ENCODE measurements at regions of chr5 and their contacts with region 1.

Region 1: DNA sequence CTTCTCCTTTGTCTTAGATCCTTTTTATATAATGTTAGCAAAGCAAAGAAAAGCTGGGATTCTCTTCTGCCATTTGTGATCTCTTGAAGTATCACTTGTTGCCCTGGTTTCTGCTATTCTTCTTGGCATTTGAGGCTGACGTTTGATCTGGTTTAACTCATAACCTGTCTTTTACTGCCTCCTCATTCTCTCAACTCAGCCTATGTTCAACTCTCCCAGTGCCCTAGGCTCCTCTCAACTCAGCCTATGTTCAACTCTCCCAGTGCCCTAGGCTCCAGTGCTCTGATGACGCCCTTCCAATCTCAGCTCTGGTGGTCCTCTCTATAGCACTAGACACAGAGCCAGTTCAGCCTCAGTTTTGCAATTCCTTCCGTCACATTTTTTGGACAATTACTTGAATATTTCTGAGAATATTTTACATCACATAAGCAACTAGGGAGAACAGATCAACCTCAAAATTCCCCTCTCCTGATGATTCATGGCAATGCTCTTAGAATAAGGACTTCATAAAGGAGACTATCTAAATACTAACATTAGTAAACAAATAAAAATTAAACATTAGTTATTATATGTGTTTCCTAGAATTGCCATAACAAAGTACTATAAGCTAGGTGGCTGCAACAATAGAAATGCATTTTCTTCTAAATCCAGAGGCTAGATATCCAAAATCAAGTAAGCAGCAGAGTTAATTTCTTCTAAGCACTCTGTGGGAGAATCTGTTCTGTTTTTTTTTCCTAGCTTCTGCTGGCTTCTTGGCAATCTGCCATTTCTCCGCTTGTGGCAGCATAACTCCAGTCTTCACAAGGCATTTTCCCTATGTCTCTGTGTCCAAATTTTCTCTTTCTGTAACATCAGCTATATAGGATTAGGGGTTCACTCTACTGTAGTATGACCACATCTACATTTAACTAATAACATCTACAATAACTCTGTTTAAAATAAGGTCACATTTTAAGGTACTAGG is 662.1 kb upstream of the FTMT start:
- DNase-seq: peak; percentile 75
- H3K4me3 ChIP-seq: no peak overlapping the region
- H3K27ac ChIP-seq: peak overlapping the region; percentile 69
- H3K4me1 ChIP-seq: peaks cover 19% of the 10 kb centered on the region
- H3K27me3 ChIP-seq: no peaks in the 10 kb centered on the region
- CTCF ChIP-seq: no peak
- POLR2A ChIP-seq: no peak

Region 2: DNA sequence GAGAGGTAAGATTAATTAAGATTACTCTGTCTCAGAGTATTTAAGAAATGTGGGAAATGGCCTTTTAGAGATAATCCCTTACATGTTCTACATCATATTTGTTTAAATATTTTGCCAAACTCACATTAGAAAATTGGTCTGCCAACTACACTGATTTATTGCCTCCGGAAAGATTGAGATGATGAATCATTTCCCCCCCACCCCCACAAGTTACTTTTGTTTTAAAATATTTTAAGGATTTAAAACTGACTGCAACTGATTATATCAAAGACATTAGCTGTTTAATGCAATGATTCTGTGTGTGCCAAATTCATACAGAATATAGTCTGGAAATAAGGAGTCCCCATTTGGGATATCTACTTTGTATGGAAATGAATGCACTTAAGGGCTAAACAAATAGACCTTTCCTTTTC is 51.1 kb before region 1 on chr5:
- CTCF ChIA-PET with region 1: no interaction called
- POLR2A ChIA-PET with region 1: no interaction called
- dilution Hi-C with region 1: no loop called
- intact Hi-C with region 1: loop called (anchors 1 kb)
- DNase-seq: peak; percentile 83
- H3K4me3 ChIP-seq: no peak overlapping the region
- H3K27ac ChIP-seq: peak overlapping the region; percentile 43
- H3K4me1 ChIP-seq: peaks cover 19% of the 10 kb centered on the region
- H3K27me3 ChIP-seq: no peaks in the 10 kb centered on the region
- CTCF ChIP-seq: no peak
- POLR2A ChIP-seq: no peak

Region 3: GRCh38 chr5:121226765-121227164 is 37.1 kb after region 1 on chr5:
- CTCF ChIA-PET with region 1: no interaction called
- POLR2A ChIA-PET with region 1: no interaction called
- dilution Hi-C with region 1: no loop called
- intact Hi-C with region 1: no loop called
- DNase-seq: no peak
- H3K4me3 ChIP-seq: no peak overlapping the region
- H3K27ac ChIP-seq: no peak overlapping the region
- H3K4me1 ChIP-seq: no peaks in the 10 kb centered on the region
- H3K27me3 ChIP-seq: no peaks in the 10 kb centered on the region
- CTCF ChIP-seq: no peak
- POLR2A ChIP-seq: no peak

Region 4: DNA sequence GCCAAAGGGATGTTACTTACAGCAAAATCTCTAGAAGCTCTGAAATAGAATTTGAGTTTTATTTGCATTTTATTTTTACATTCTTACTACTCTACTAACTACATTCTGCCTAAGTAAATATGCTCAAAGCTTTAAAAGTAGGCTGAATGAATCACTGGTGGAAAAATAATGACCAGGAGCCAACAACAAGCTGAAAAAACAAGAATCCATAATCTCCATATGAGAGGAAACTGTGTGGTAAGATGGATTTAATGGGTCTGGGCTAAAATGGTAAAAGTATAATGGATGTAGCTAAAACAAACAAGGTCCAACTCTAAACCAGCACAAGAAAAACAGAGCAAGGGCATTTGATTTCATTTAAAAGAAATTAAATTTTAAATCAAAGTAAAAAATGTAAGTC is 136.3 kb after region 1 on chr5:
- CTCF ChIA-PET with region 1: no interaction called
- POLR2A ChIA-PET with region 1: no interaction called
- dilution Hi-C with region 1: no loop called
- intact Hi-C with region 1: loop called (anchors 2 kb)
- DNase-seq: peak; percentile 90
- H3K4me3 ChIP-seq: no peak overlapping the region
- H3K27ac ChIP-seq: no peak overlapping the region
- H3K4me1 ChIP-seq: no peaks in the 10 kb centered on the region
- H3K27me3 ChIP-seq: no peaks in the 10 kb centered on the region
- CTCF ChIP-seq: no peak
- POLR2A ChIP-seq: peak; percentile 34

Region 5: GRCh38 chr5:121962347-121962670 is 772.7 kb after region 1 on chr5:
- CTCF ChIA-PET with region 1: no interaction called
- POLR2A ChIA-PET with region 1: no interaction called
- dilution Hi-C with region 1: no loop called
- intact Hi-C with region 1: loop called (anchors 5 kb)
- DNase-seq: peak; percentile 42
- H3K4me3 ChIP-seq: peak overlapping the region; percentile 79 to 95 (median 88)
- H3K27ac ChIP-seq: peak overlapping the region; percentile 86
- H3K4me1 ChIP-seq: peaks cover 14% of the 10 kb centered on the region
- H3K27me3 ChIP-seq: peaks cover 4 to 5% of the 10 kb centered on the region in 2 experiments
- CTCF ChIP-seq: no peak
- POLR2A ChIP-seq: no peak

Measured in endothelial cell of umbilical vein (primary cell).